ENCODE measurements at regions of chr18 and their contacts with region 1.

Region 1: GRCh38 chr18:9771261-9771976 is 63.3 kb downstream of the RAB31 start:
- DNase-seq: peak; percentile 57 to 66
- ATAC-seq: peak; percentile 86 to 98 (median 93)
- H3K4me3 ChIP-seq: no peak overlapping the region
- H3K4me3 Mint-ChIP-seq: no peak overlapping the region
- H3K27ac ChIP-seq: no peak overlapping the region
- H3K27ac Mint-ChIP-seq: peak overlapping the region in 1 of 2 donors; percentile 9
- H3K4me1 ChIP-seq: peaks cover 13% of the 10 kb centered on the region
- H3K4me1 Mint-ChIP-seq: peaks cover 8 to 11% of the 10 kb centered on the region in 2 donors
- H3K27me3 ChIP-seq: no peaks in the 10 kb centered on the region
- H3K27me3 Mint-ChIP-seq: peaks cover 12 to 21% of the 10 kb centered on the region in 2 donors
- CTCF ChIP-seq: peak; percentile 98

Region 2: GRCh38 chr18:9575558-9575957 is 195.9 kb before region 1 on chr18:
- intact Hi-C with region 1: loop called (anchors 1 kb)
- DNase-seq: peak in 1 of 2 donors; percentile 41
- ATAC-seq: peak; percentile 71 to 80 (median 75)
- H3K4me3 ChIP-seq: no peak overlapping the region
- H3K4me3 Mint-ChIP-seq: no peak overlapping the region
- H3K27ac ChIP-seq: no peak overlapping the region
- H3K27ac Mint-ChIP-seq: peak overlapping the region; percentile 15 to 49
- H3K4me1 ChIP-seq: no peaks in the 10 kb centered on the region
- H3K4me1 Mint-ChIP-seq: peaks cover 0 to 13% of the 10 kb centered on the region in 2 donors
- H3K27me3 ChIP-seq: no peaks in the 10 kb centered on the region
- H3K27me3 Mint-ChIP-seq: no peaks in the 10 kb centered on the region
- CTCF ChIP-seq: peak; percentile 61